PC-9 (cell line): ENCODE measurements at regions of chr3 and their contacts with region 1.

Region 1: GRCh38 chr3:181103605-181104004 is 114.1 kb upstream of the DNAJC19 start:
- DNase-seq: peak in 1 of 2 experiments; percentile 3
- H3K4me3 ChIP-seq: no peak overlapping the region
- H3K27ac ChIP-seq: no peak overlapping the region
- H3K4me1 ChIP-seq: no peaks in the 10 kb centered on the region
- H3K27me3 ChIP-seq: no peaks in the 10 kb centered on the region
- CTCF ChIP-seq: peak; percentile 75

Region 2: DNA sequence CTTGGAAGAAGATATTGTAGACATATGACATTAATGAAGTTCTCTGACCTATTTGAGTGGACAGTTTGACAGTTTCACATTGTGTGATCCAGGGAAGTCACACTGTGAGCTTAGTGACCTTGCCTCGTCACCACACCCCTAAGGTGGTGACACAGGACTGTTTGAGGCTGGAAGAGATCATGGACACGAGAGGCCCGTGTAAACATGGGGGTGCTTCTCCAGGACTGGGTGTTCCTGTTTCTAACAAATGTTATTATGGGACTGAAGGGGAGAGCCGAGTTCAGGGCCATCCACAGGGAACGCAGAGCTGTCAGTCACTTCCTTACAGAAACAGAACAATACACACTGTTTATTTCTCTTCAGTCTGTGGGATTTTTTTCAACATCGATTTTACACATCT is 17.6 kb before region 1 on chr3:
- CTCF ChIA-PET with region 1: no interaction called
- POLR2A ChIA-PET with region 1: no interaction called
- intact Hi-C with region 1: no loop called
- DNase-seq: no peak
- H3K4me3 ChIP-seq: no peak overlapping the region
- H3K27ac ChIP-seq: no peak overlapping the region
- H3K4me1 ChIP-seq: no peaks in the 10 kb centered on the region; the same call in 1 of the 2 replicates
- H3K27me3 ChIP-seq: no peaks in the 10 kb centered on the region
- CTCF ChIP-seq: no peak

Region 3: DNA sequence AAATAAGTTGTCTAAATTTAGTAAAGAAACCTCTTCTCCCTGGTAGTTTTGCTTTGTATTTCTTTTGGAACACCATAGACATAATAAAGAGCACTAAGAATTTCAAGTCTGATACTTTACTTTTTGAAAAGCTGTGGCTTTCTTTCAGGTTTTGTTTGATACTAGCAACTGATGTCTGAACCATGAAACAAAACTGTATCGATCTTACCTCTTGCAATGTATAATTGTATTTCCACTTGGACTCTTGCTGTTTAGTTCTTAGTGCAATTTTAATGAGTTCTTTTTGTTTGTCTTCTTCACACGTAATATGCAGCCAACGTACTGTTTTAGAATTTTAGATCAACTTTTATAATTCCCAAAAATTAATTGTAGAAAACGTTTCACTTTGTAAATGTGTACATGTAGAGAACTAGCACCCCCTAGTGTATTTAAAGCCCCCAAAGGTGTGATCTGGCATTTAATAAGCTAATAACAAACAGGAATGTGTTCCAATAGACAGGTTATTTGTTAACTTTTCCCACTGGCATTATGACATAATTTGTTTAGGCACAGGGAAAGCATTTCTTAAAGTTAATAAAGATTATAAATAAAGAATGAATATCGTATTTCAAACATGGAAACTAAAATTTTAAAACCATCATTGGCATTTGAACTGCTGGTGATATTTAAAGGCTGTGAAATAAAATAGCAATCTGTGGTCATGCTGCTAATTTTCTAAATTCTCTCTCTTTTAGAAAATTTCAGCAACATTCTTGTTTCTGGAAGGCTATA is 175.0 kb after region 1 on chr3:
- CTCF ChIA-PET with region 1: interaction called, 10 read pairs
- POLR2A ChIA-PET with region 1: no interaction called
- intact Hi-C with region 1: no loop called
- DNase-seq: no peak
- H3K4me3 ChIP-seq: no peak overlapping the region
- H3K27ac ChIP-seq: no peak overlapping the region
- H3K4me1 ChIP-seq: no peaks in the 10 kb centered on the region
- H3K27me3 ChIP-seq: no peaks in the 10 kb centered on the region
- CTCF ChIP-seq: peak; percentile 52

Region 4: DNA sequence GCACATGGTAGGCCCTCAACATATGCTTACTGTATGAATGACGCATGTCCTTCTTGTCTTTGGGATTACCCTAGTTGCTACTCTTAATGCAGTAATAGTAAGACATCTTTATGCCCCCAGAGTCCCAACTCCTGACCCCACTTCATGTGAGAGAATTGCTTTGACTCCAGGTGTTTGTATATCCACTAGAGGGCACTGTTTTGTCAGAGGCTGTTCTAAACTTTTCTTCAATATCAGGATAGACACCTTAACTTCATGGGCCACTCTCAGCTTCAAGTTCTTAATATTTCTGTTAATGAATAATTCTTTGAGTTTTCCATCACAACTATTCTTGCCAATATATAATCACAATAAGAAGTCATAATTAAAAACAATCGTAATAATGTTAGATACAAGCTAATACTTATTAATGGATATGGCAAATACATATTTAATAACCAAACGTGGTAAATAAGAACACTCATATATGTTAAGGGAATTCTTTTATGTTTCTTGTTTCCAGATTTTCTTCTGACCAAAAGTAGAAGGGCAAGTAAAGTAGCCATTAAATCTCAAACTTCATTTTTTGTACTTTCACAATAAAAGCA is 223.1 kb after region 1 on chr3:
- CTCF ChIA-PET with region 1: no interaction called
- POLR2A ChIA-PET with region 1: no interaction called
- intact Hi-C with region 1: no loop called
- DNase-seq: no peak
- H3K4me3 ChIP-seq: no peak overlapping the region
- H3K27ac ChIP-seq: no peak overlapping the region
- H3K4me1 ChIP-seq: no peaks in the 10 kb centered on the region
- H3K27me3 ChIP-seq: no peaks in the 10 kb centered on the region; the same call in 1 of the 2 replicates
- CTCF ChIP-seq: peak; percentile 94

Region 5: GRCh38 chr3:181694805-181695660 is 591.4 kb after region 1 on chr3:
- CTCF ChIA-PET with region 1: no interaction called
- POLR2A ChIA-PET with region 1: no interaction called
- intact Hi-C with region 1: loop called (anchors 5 kb)
- DNase-seq: peak in 1 of 2 experiments; percentile 57
- H3K4me3 ChIP-seq: peak overlapping the region; percentile 52; the same call in 1 of the 2 replicates
- H3K27ac ChIP-seq: no peak overlapping the region
- H3K4me1 ChIP-seq: no peaks in the 10 kb centered on the region; the same call in 1 of the 2 replicates
- H3K27me3 ChIP-seq: peaks cover 36% of the 10 kb centered on the region; the same call in 1 of the 2 replicates
- CTCF ChIP-seq: no peak; the same call in 1 of the 2 replicates